ENCODE measurements at regions of chr2 and their contacts with region 1.

Region 1: DNA sequence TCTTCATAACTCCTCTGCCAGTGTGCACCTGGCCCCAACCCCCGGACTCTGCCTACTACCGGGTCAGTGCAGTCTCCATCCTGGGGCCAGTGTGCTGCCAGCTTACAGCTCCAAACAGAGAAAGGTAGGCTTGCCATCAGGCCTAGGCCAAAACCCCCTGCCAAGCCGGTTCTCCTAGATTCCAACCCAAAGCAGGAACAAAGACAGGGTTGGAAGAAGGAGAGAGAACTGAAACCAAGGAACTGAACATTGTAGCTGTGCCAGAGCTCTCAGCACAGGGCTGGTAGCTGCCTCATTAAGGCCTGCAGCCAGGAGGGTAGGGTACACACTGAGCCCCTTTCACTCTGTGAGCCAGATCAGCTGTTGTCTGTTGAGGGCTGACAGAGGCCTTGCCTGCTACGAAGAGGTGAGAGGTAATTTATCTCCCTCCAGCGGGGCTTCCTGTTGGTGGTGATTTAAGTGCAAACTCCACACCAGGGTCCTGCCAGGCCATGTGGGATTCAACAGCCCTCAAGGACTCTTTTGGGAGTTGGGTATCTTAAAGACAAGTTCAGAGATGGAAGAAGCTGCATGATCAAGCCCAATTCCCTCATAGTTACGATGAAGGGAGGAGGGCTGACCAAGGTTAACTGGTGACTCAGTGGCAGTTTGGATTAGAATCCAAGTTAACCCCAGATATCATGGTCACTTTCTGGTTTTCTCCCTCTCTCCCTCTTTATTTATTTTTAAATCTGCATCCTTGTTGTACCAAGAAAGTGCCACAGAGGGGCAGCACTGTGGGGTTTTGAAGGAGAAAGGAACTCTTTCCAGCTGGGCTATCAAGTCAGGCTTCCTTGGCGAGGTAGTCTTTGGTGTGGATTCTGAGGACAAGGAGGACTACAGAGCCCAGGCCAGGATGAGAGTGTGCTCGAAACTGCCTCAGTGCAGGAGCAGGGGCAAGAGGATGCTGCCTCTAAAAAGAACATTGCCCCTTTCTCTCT is 48.1 kb downstream of the CYRIA start:
- DNase-seq: peak; percentile 87
- H3K4me3 ChIP-seq: no peak overlapping the region
- H3K27ac ChIP-seq: peak overlapping the region; percentile 48 to 66
- H3K4me1 ChIP-seq: peaks cover 12% of the 10 kb centered on the region
- H3K27me3 ChIP-seq: no peaks in the 10 kb centered on the region
- CTCF ChIP-seq: peak in 2 of 4 experiments; percentile 29 to 36
- POLR2A ChIP-seq: no peak

Region 2: GRCh38 chr2:16148632-16149348 is 468.8 kb before region 1 on chr2:
- intact Hi-C with region 1: no loop called
- DNase-seq: no peak
- H3K4me3 ChIP-seq: no peak overlapping the region
- H3K27ac ChIP-seq: no peak overlapping the region
- H3K4me1 ChIP-seq: no peaks in the 10 kb centered on the region
- H3K27me3 ChIP-seq: no peaks in the 10 kb centered on the region
- CTCF ChIP-seq: no peak
- POLR2A ChIP-seq: no peak

Region 3: DNA sequence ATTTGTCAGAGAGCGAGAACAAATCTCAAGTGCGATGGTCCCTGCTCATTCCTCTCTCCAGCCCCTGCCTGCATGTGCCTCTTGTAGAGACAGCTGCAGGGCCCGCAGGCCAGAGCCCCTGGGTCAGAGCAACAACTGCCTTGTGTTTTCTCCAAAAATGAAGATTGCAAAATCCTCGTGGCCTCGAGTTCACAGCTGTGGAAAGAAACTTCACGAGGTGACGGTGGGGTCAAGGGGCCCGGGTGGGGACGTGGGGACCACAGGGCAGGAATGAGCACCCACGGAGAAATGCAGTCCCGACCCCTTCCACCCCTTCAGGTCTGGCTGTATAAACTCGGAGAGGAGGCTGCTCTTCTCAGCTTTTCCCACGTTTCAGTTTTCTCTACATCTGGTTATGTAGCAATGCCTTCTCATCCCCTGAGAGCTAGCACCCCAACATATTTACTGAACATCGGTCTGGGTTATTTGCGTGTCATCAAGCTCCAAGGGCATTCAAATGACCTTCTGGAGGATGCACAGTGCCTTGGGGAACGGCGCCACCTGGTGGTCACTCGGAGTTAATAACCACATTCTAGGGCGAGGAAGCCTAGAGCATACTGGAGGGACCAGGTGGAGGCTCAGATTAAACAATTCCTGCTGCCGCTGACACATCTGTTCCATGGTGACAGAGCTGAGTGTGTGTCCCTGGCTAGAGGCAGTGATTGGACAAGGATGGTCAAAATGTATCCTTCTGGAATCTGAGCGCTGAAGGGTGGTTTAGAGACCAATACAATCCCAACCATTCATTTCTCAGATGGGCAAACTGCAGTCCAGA is 139.5 kb after region 1 on chr2:
- intact Hi-C with region 1: loop called (anchors 2 kb)
- DNase-seq: peak; percentile 77
- H3K4me3 ChIP-seq: no peak overlapping the region
- H3K27ac ChIP-seq: no peak overlapping the region
- H3K4me1 ChIP-seq: no peaks in the 10 kb centered on the region
- H3K27me3 ChIP-seq: no peaks in the 10 kb centered on the region
- CTCF ChIP-seq: peak; percentile 79 to 95 (median 90)
- POLR2A ChIP-seq: no peak

Measured in prostate gland (tissue), 2 donors.